CD8-positive, alpha-beta T cell (primary cell): ENCODE measurements at regions of chr15 and their contacts with region 1.

Region 1: DNA sequence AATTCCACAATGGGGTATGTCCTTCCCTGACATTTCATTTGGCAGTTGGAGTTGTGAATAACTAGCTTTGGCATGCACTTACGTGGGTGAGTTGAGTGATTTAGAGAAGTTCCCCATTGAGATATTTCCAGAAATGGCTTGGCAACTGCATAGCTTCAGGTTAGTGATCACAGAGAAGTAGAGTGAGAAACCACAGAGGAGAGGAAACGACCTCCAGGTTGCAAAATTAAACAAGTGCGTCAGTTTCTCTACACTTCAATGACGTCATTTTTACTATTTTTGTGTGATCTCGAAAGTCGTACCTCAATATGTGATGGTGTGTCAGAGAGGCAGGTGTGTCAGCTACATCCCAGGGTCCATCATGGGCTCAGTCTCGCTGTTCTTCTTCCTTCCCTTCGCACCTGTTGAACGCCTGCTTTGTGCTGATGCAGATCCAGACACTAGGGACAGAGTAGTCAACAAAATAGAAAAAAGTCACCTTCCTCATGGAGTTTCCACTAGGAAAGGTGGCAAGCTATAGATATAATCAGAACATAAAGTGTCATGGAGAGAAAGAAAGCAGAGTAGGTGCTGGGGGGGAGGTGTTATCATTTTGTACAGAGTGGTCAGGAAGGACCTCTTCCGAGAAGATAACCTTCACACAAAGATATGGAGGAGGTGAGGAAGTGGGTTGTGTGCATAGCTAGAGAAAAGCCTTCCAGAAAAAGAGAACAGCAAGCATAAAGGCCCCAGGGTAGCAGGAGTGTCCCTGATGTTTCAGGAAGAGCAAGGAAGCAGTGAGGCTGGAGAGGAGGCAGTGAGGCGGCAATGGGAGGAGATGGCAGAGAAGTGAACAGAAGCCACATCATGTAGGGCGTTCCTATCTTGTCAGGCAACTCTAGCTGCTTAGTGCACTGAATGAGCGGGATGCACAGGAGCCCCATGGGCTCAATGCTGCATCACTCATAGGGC is 75.6 kb downstream of the MCTP2 start:
- DNase-seq: peak in 4 of 9 experiments; percentile 11 to 85 (median 60)
- ATAC-seq: peak; percentile 74
- H3K4me3 ChIP-seq: no peak overlapping the region
- H3K4me3 Mint-ChIP-seq: peak overlapping the region; percentile 36
- H3K27ac ChIP-seq: peak overlapping the region in 1 of 2 experiments; percentile 69
- H3K27ac Mint-ChIP-seq: peak overlapping the region; percentile 82
- H3K4me1 ChIP-seq: peaks cover 24% of the 10 kb centered on the region
- H3K4me1 Mint-ChIP-seq: peaks cover 39% of the 10 kb centered on the region
- H3K27me3 ChIP-seq: no peaks in the 10 kb centered on the region
- H3K27me3 Mint-ChIP-seq: no peaks in the 10 kb centered on the region
- CTCF ChIP-seq: no peak

Region 2: DNA sequence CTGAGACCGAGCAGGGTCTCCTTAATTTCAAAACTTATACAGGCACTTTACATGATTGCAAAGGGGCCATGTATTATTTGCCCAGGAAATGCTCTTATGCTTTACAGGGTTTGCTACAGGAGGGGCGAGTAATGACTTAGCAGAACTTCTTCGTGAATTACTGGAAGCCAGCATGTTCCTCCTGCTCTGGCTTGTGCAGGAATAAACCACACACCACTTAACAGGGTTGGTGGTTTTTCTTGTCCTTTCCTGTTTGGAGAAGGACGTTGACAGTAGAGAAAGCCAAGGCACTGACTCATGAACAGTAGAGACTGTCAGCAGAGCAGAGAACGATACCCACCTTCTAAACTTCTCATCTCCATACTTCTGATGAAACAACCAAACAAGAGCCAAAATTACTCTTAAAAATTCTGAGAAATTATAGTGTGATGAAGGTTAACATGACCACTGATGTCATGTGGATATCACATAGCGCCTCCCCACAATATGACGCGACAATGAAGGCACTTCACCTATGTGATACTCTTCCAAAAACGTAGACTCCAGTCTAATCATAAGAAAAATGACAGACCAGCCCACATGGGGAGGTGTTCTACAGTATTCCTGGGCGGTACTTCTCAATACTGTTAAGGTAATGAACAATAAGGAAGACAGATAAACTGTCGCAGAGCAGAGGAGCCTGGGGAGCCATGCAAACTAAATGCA is 100.4 kb before region 1 on chr15:
- CTCF ChIA-PET with region 1: no interaction called
- POLR2A ChIA-PET with region 1: no interaction called
- intact Hi-C with region 1: no loop called
- DNase-seq: peak in 2 of 9 experiments; percentile 6 to 9
- ATAC-seq: peak; percentile 31
- H3K4me3 ChIP-seq: peak overlapping the region in 1 of 2 experiments; percentile 2
- H3K4me3 Mint-ChIP-seq: peak overlapping the region; percentile 40
- H3K27ac ChIP-seq: no peak overlapping the region
- H3K27ac Mint-ChIP-seq: no peak overlapping the region
- H3K4me1 ChIP-seq: peaks cover 5% of the 10 kb centered on the region
- H3K4me1 Mint-ChIP-seq: peaks cover 12% of the 10 kb centered on the region
- H3K27me3 ChIP-seq: no peaks in the 10 kb centered on the region
- H3K27me3 Mint-ChIP-seq: peaks cover 11% of the 10 kb centered on the region
- CTCF ChIP-seq: no peak

Region 3: DNA sequence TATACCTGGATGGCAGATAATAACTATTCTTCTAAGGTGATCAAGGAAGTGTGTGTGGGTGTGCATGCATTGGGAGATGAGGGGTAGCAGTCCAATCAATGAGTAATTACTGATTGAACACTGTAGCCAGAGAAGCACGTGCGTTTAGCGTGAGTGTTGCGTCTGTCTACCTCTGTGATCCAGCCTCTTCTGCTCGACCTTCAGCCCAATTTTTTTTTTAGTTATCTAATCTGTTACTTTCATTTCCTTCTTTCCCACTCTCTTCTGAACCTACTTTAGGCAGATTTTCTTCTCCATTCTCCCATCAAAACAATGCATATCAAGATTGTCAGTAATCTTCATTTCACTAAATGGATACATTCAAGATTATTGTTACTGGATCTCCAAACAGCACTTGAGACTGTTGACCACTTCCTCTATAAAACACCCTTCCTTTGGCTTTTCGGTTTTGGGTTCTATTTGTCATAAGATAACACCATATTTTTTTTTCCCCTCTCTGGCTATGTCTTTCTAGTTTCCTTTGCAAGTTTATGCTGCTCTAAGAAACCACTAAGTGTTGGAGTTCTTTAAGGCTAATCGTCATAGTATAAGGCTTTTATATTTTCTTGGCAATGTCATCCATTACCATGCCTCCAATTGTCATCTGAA is 34.6 kb before region 1 on chr15:
- CTCF ChIA-PET with region 1: no interaction called
- POLR2A ChIA-PET with region 1: no interaction called
- intact Hi-C with region 1: loop called in 1 of 2 experiments (anchors 5 kb)
- DNase-seq: peak in 3 of 9 experiments; percentile 27 to 78 (median 66)
- ATAC-seq: peak; percentile 84
- H3K4me3 ChIP-seq: no peak overlapping the region
- H3K4me3 Mint-ChIP-seq: no peak overlapping the region
- H3K27ac ChIP-seq: peak overlapping the region; percentile 21 to 81
- H3K27ac Mint-ChIP-seq: no peak overlapping the region
- H3K4me1 ChIP-seq: peaks cover 21% of the 10 kb centered on the region
- H3K4me1 Mint-ChIP-seq: peaks cover 9% of the 10 kb centered on the region
- H3K27me3 ChIP-seq: no peaks in the 10 kb centered on the region
- H3K27me3 Mint-ChIP-seq: no peaks in the 10 kb centered on the region
- CTCF ChIP-seq: no peak

Region 4: GRCh38 chr15:94441760-94442159 is 134.8 kb after region 1 on chr15:
- CTCF ChIA-PET with region 1: no interaction called
- POLR2A ChIA-PET with region 1: no interaction called
- intact Hi-C with region 1: no loop called
- DNase-seq: no peak
- ATAC-seq: no peak
- H3K4me3 ChIP-seq: no peak overlapping the region
- H3K4me3 Mint-ChIP-seq: no peak overlapping the region
- H3K27ac ChIP-seq: no peak overlapping the region
- H3K27ac Mint-ChIP-seq: no peak overlapping the region
- H3K4me1 ChIP-seq: no peaks in the 10 kb centered on the region
- H3K4me1 Mint-ChIP-seq: no peaks in the 10 kb centered on the region
- H3K27me3 ChIP-seq: no peaks in the 10 kb centered on the region
- H3K27me3 Mint-ChIP-seq: no peaks in the 10 kb centered on the region
- CTCF ChIP-seq: no peak